A549 (cell line): ENCODE measurements at regions of chr22 and their contacts with region 1.

Region 1: DNA sequence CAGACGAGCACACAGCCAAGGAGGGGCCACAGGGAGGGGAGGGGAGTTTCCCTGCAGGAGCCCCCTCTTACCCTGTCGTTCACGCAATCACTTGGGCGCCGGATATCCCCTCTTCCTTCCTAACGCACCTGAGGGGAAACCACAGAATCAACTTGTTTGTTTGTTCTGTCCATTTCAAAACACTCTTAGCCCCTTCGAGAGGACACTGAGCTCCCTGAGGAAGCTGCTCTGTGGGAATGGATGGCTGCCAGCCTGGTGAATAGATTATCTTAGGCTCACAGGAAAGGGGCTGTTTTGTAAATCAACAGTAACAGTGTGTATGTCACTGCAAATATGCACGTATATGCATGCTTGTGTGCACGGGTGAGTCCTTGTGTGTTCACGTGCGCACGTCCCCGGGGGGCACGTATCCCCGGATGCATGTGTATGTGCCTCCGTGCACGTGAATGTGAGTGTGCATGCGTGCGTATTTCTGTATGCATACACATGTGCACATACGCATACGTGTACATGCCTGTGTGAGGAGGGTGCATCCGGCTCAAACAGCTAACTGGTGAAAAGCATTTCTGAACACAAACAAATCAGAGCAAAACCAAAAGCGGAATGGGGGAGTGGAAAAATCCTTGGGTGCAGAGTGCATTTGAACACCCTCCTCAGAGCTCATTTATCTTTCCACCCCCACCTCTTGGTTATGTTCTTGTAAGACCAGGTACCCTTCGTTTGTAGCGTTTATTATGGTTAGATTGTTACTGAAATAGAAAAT is 7.2 kb downstream of the ARSA start:
- DNase-seq: peak in 1 of 2 experiments; percentile 46
- ATAC-seq: peak; percentile 85 to 93
- H3K4me3 ChIP-seq: peak overlapping the region; percentile 43
- H3K27ac ChIP-seq: peak overlapping the region in 1 of 2 experiments; percentile 4; a peak in 2 of 6 replicates
- H3K4me1 ChIP-seq: peaks cover 9% of the 10 kb centered on the region; the same call in 2 of the 3 replicates
- CTCF ChIP-seq: no peak; the same call in 1 of the 3 replicates
- EP300 ChIP-seq: no peak
- POLR2A ChIP-seq: no peak
- RAD21 ChIP-seq: no peak

Region 2: GRCh38 chr22:50507991-50508884 is 112.5 kb before region 1 on chr22 and contains the start of gene NCAPH2:
- CTCF ChIA-PET with region 1: no interaction called
- POLR2A ChIA-PET with region 1: no interaction called
- DNase-seq: peak; percentile 85 to 94
- ATAC-seq: peak; percentile 71 to 74
- H3K4me3 ChIP-seq: peak within 1 kb of the TSS; percentile 94
- H3K27ac ChIP-seq: peak within 1 kb of the TSS; percentile 95 to 97
- H3K4me1 ChIP-seq: peaks cover 15% of the 10 kb centered on the region
- CTCF ChIP-seq: no peak
- EP300 ChIP-seq: no peak
- POLR2A ChIP-seq: peak; percentile 61
- RAD21 ChIP-seq: no peak
- polyA plus RNA-seq, gene NCAPH2: 13.9 and 14.3 TPM in 2 replicates

Region 3: GRCh38 chr22:50525390-50526068 is 95.2 kb before region 1 on chr22 and contains the start of gene SCO2:
- CTCF ChIA-PET with region 1: interaction called, 26 read pairs
- POLR2A ChIA-PET with region 1: interaction called, 10 read pairs
- DNase-seq: peak; percentile 87 to 97
- ATAC-seq: peak; percentile 30 to 67
- H3K4me3 ChIP-seq: peak within 1 kb of the TSS; percentile 70
- H3K27ac ChIP-seq: peak within 1 kb of the TSS; percentile 92 to 99
- H3K4me1 ChIP-seq: peaks cover 20% of the 10 kb centered on the region
- CTCF ChIP-seq: no peak
- EP300 ChIP-seq: no peak
- POLR2A ChIP-seq: peak; percentile 64
- RAD21 ChIP-seq: no peak
- polyA plus RNA-seq, gene SCO2: 0.37 and 1.9 TPM in 2 replicates

Region 4: GRCh38 chr22:50562523-50563412 is 58.0 kb before region 1 on chr22 and contains the start of gene SYCE3:
- CTCF ChIA-PET with region 1: interaction called, 12 read pairs
- POLR2A ChIA-PET with region 1: no interaction called
- DNase-seq: peak; percentile 73 to 91
- ATAC-seq: peak; percentile 90 to 97
- H3K4me3 ChIP-seq: peak within 1 kb of the TSS; percentile 64
- H3K27ac ChIP-seq: peak within 1 kb of the TSS; percentile 76 to 96
- H3K4me1 ChIP-seq: no peaks in the 10 kb centered on the region
- CTCF ChIP-seq: peak; percentile 73
- EP300 ChIP-seq: no peak
- POLR2A ChIP-seq: peak; percentile 35; the same call in 1 of the 2 replicates
- RAD21 ChIP-seq: peak; percentile 34 to 62; a peak in 4 of 5 replicates
- polyA plus RNA-seq, gene SYCE3: 0.30 and 0.59 TPM in 2 replicates

Region 5: DNA sequence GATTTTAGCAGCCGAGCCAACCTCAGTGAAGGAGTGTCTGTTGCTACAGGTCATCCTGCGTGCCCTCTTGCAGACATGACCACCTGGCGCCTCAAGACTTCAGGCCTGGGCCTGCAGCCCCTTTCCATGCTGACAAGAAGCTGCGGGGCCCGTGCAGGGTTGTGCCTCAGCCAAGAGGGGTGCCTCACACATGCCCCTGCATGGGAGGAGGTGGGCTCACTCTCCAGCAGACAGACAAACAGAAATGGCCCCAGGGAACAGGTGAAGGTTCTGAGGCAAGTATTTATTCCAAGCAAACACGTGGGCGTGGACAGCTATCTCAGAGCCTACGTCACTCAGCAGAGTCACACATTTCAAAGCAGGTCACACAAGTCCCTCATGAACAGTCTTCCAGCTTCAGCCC is 52.2 kb before region 1 on chr22:
- CTCF ChIA-PET with region 1: interaction called, 12 read pairs
- POLR2A ChIA-PET with region 1: no interaction called
- DNase-seq: no peak
- ATAC-seq: no peak
- H3K4me3 ChIP-seq: no peak overlapping the region
- H3K27ac ChIP-seq: no peak overlapping the region
- H3K4me1 ChIP-seq: no peaks in the 10 kb centered on the region
- CTCF ChIP-seq: no peak
- EP300 ChIP-seq: no peak
- POLR2A ChIP-seq: no peak
- RAD21 ChIP-seq: no peak

Region 6: GRCh38 chr22:50597097-50597496 is 23.7 kb before region 1 on chr22:
- CTCF ChIA-PET with region 1: interaction called, 10 read pairs
- POLR2A ChIA-PET with region 1: no interaction called
- DNase-seq: no peak
- ATAC-seq: no peak
- H3K4me3 ChIP-seq: no peak overlapping the region
- H3K27ac ChIP-seq: no peak overlapping the region
- H3K4me1 ChIP-seq: peaks cover 4% of the 10 kb centered on the region; the same call in 1 of the 3 replicates
- CTCF ChIP-seq: no peak
- EP300 ChIP-seq: no peak
- POLR2A ChIP-seq: no peak
- RAD21 ChIP-seq: no peak

Region 7: DNA sequence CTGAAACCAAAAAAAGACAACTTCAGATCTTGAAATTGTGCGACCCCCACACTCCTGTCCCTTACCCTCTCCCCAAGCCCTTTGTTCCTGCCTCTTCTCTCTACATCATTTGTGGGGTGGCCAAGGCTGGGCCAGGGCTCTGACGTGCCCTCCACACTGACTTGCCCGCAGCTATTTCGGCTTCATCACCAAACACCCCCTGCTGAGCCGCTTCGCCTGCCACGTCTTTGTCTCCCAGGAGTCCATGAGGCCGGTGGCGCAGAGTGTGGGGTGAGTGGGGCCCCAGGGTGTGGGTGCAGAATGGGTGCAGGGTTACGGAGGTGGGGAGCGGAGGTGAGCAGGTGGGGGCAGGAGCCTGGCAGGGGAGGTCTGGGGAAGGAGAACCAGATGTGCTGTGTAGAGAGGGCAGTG is 10.7 kb before region 1 on chr22:
- CTCF ChIA-PET with region 1: interaction called, 15 read pairs
- POLR2A ChIA-PET with region 1: no interaction called
- DNase-seq: no peak
- ATAC-seq: no peak
- H3K4me3 ChIP-seq: no peak overlapping the region
- H3K27ac ChIP-seq: no peak overlapping the region
- H3K4me1 ChIP-seq: no peaks in the 10 kb centered on the region
- CTCF ChIP-seq: no peak
- EP300 ChIP-seq: no peak
- POLR2A ChIP-seq: no peak
- RAD21 ChIP-seq: no peak

Region 8: GRCh38 chr22:50674606-50675549 is 54.1 kb after region 1 on chr22:
- CTCF ChIA-PET with region 1: no interaction called
- POLR2A ChIA-PET with region 1: no interaction called
- DNase-seq: peak in 1 of 2 experiments; percentile 50
- ATAC-seq: peak; percentile 49 to 76
- H3K4me3 ChIP-seq: peak overlapping the region; percentile 58
- H3K27ac ChIP-seq: peak overlapping the region; percentile 48 to 84
- H3K4me1 ChIP-seq: 0 out of 3 replicates have a peak, but pooled peaks cover 6% of the 10 kb centered on the region
- CTCF ChIP-seq: no peak
- EP300 ChIP-seq: no peak
- POLR2A ChIP-seq: no peak
- RAD21 ChIP-seq: no peak